ENCODE measurements at regions of chr2 and their contacts with region 1.

Region 1: GRCh38 chr2:213152065-213152794 is 818 bp upstream of the IKZF2 start:
- H3K4me3 ChIP-seq: peak overlapping the region; percentile 59
- H3K27ac ChIP-seq: peak overlapping the region; percentile 86
- H3K4me1 ChIP-seq: peaks cover 8% of the 10 kb centered on the region; the same call in 1 of the 2 replicates
- CTCF ChIP-seq: no peak; the same call in 1 of the 2 replicates

Region 2: GRCh38 chr2:212863185-212863588 is 289.0 kb before region 1 on chr2:
- CTCF ChIA-PET with region 1: interaction called, 10 read pairs
- POLR2A ChIA-PET with region 1: no interaction called
- H3K4me3 ChIP-seq: no peak overlapping the region
- H3K27ac ChIP-seq: no peak overlapping the region
- H3K4me1 ChIP-seq: no peaks in the 10 kb centered on the region
- CTCF ChIP-seq: peak; percentile 41; the same call in 1 of the 2 replicates

Region 3: DNA sequence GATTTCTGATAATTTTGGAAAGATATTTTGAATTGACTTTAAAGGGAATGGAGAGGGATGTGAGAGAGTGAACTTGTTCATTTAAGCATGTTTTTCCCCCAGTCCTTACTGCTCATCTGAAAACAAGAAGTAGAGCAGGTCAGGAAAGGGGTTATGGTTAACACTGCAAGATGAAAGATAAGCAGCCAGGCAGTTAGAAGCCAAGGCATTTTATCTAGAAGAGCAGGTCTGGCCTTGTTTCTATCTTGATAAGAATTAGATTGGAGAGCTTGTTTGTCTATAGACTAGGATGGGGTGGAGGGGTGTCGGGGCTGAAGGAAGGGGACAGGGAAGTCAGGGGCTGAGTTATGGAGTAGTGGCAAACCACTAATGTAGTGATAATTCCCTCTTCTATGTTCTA is 172.4 kb before region 1 on chr2:
- CTCF ChIA-PET with region 1: no interaction called
- POLR2A ChIA-PET with region 1: no interaction called
- H3K4me3 ChIP-seq: no peak overlapping the region
- H3K27ac ChIP-seq: no peak overlapping the region
- H3K4me1 ChIP-seq: peaks cover 15% of the 10 kb centered on the region
- CTCF ChIP-seq: no peak